HEK293 (cell line): ENCODE measurements at regions of chr19 and their contacts with region 1.

Region 1: DNA sequence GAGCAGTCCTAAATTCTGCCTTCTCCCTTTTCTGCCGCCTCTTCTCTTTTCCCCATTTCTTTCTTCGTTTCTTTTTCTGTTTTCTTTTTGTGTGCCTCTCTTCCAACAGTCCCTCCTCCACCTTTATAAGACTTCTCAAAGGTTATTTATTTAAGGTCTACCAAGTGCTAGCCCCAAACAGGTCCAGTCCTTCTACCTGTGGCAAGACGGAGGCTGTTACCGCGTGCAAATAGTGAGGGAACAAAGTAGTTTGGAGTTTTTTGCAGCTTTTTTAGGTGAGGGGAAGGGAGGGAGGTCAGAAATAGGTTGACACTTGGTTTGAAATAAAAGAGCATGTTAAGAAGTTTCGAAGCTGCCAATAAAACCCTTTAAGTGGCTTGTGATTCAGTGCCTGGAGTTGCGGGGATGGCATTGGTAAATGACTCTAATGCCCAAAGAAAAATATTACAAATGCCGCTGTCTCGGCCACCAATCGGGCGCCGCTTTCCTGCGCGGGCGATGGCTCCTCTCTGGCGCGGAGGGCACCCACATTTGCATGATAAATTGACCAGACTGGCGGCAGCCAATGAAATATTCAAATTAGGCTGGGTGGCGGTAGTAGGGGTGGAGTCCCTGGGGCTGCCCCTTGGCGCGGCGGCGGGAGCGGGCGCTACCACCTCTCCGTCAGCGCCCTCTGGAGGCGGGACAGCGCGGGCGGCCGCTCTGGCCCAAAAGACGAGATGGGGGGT is 7.5 kb upstream of the TSHZ3 start:
- H3K4me3 ChIP-seq: no peak overlapping the region
- H3K27ac ChIP-seq: no peak overlapping the region; the same call in 1 of the 2 replicates
- H3K4me1 ChIP-seq: peaks cover 8% of the 10 kb centered on the region
- CTCF ChIP-seq: peak; percentile 90

Region 2: GRCh38 chr19:31372246-31372778 is 15.6 kb after region 1 on chr19:
- CTCF ChIA-PET with region 1: interaction called, 11 read pairs
- POLR2A ChIA-PET with region 1: no interaction called
- H3K4me3 ChIP-seq: no peak overlapping the region
- H3K27ac ChIP-seq: no peak overlapping the region
- H3K4me1 ChIP-seq: peaks cover 8% of the 10 kb centered on the region
- CTCF ChIP-seq: no peak

Region 3: DNA sequence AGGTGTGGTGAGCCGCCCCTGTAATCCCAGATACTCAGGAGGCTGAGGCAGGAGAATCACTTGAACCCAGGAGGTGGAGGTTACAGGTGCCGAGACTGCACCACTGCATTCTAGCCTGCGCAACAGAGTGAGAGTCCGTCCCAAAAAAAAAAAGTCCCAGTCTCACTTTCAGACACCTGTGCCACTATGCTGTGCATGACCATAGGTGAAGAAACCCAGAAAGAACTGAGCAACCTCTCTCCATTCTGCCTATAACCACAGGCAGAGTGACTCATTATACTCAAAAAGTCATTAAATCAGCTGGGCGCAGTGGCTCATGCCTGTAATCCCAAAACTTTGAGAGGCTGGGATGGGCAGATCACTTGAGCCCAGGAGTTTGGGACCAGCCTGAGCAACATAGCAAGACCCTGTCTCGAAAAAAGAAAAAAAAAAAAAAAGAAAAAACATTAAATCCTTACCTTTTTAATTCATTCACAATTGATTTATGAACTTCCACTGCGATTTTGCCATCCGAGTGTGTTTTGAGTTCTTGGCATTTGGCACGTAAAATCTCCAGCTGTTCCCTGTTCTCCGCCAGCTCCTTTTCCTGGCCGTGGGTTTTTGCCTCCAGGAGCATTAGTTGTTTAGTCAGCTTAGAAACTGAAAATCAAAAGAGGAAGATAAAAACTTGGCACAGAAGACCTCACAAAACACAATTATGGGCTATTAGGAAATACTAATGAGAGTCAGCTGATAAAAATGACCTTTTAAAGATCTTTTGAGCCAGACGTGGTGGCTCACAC is 1558.3 kb after region 1 on chr19:
- CTCF ChIA-PET with region 1: no interaction called
- POLR2A ChIA-PET with region 1: no interaction called
- H3K4me3 ChIP-seq: no peak overlapping the region
- H3K27ac ChIP-seq: no peak overlapping the region
- H3K4me1 ChIP-seq: no peaks in the 10 kb centered on the region
- CTCF ChIP-seq: no peak